Heart right ventricle (tissue), 16 donors: ENCODE measurements at regions of chr1 and their contacts with region 1.

Region 1: GRCh38 chr1:234722904-234723720 is 113.1 kb upstream of the IRF2BP2 start:
- DNase-seq: peak; percentile 59 to 74
- ATAC-seq: peak; percentile 4 to 32 (median 16)
- H3K4me3 ChIP-seq: peak overlapping the region in 5 of 10 donors; percentile 12 to 35 (median 15)
- H3K27ac ChIP-seq: peak overlapping the region; percentile 91 to 100 (median 98)
- H3K4me1 ChIP-seq: peaks cover 57 to 99% (median 93%) of the 10 kb centered on the region in 9 donors
- H3K27me3 ChIP-seq: no peaks in the 10 kb centered on the region
- CTCF ChIP-seq: no peak

Region 2: DNA sequence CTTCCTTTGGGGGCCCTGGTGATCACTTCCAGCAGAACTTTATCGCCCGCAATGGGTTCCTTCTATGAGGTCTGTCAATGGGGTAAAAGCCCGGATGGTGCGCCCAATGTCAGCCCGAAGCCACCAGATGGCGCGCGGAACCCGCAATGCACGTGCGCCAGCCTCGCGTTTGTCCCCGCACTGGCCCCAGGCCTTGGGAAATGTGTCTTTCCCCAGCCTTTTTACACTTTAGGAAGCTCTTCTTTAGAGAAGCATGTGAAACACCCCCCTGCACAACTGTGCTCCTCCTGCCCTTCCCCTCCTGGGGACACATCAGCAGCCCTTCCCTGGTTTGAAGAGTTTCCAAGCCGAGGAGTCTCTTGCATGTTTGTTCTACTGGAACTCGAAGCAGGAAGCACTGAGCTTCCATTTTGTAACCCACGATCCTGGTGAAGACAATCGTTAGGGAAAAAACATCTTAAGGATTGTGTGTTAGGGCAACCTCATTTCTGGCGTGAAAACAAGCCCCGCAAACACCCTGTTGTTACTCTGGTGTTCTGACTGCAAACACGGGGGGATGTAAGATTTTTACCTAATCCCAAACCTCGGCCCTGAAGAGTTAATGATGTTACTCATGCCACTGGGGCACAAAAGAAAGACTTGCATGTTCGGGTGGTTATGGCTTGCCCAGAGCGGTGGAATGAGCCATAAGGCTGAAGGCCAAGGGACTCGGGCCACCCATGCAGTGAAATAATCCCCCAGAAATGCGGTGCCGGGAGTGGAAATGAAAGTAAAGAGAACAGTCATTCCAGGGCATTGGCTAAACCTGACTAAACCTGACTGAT is 223.8 kb before region 1 on chr1:
- intact Hi-C with region 1: loop called in 7 of 10 experiments (anchors 2 to 10 kb)
- DNase-seq: peak; percentile 92 to 93
- ATAC-seq: peak; percentile 95 to 98 (median 97)
- H3K4me3 ChIP-seq: peak overlapping the region in 6 of 10 donors; percentile 3 to 21 (median 12)
- H3K27ac ChIP-seq: peak overlapping the region; percentile 61 to 88 (median 84)
- H3K4me1 ChIP-seq: peaks cover 4 to 48% (median 30%) of the 10 kb centered on the region in 9 donors
- H3K27me3 ChIP-seq: no peaks in the 10 kb centered on the region
- CTCF ChIP-seq: peak; percentile 92 to 99 (median 96)

Region 3: DNA sequence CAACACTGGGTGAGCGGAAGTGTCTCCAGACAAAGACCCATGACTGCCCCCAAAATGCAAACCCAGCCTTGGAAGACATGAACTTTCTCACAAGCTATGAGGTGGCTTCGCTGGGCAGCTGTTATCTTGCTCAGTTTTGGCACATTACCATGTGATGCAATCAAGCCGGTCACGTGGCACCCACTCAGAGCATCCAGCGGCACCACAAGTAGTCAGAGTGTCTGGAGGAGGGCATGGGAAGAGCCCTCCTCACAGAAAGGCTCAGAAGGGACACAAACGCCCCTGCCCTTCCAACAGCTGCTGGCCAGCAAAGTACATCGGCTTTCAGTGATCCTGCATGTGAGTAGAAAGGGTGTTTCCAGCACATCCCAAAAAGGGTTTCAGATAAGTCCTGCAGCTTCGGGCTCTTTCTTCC is 32.3 kb after region 1 on chr1:
- intact Hi-C with region 1: loop called in 1 of 10 experiments (anchors 5 kb)
- DNase-seq: peak; percentile 65 to 67
- ATAC-seq: peak; percentile 50 to 90 (median 80)
- H3K4me3 ChIP-seq: peak overlapping the region in 1 of 10 donors; percentile 6
- H3K27ac ChIP-seq: no peak overlapping the region
- H3K4me1 ChIP-seq: peaks cover 3 to 33% (median 16%) of the 10 kb centered on the region in 9 donors
- H3K27me3 ChIP-seq: no peaks in the 10 kb centered on the region
- CTCF ChIP-seq: no peak

Region 4: DNA sequence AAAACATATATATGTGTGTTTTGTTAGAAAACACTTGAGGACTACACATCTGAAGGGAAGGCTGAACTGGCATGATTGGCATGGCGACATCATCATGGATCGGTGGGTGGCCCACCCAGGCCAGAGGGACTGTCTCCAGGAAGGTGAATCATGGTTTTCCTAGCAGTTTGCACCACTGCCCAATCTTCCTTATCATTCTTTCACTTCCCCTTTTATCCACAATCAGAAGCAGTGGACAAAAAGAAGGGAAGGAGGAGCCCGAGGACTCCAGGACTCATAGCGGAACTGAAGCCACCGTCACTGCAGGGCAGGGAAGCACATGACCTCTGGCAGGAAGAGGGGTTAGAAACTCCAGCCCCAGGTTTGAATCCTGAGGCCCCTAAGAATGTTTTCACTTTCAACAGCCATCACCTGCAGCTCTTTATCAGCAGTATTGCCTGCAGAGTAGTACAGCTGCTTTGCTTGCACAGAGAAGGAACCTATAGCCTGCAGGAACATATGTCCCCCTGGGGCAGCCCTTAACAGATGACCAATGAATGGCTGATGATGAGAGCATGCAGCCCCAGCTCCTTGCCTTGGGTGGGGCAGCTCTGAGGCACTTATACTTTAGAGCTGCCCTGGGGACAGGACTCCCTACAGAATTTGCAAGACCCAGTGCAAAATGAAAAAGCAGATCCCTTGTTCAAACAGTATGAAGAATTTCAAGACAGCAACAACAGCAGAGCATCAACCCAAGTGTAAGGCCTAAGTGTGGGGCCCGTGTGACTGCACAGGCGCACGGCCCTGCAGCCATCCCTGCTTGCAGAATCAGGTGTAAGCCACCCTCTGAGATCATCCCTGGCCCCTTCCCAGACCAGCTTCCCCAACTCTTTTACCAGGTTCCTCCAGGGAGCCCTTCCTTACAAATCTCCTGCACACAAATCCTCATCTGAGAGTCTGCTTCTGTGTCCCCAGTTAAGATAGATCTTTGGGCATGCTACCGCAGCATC is 128.6 kb after region 1 on chr1:
- intact Hi-C with region 1: loop called in 2 of 10 experiments (anchors 5 to 10 kb)
- DNase-seq: no peak
- ATAC-seq: peak in 7 of 8 donors; percentile 34 to 71 (median 47)
- H3K4me3 ChIP-seq: no peak overlapping the region
- H3K27ac ChIP-seq: peak overlapping the region in 1 of 10 donors; percentile 82
- H3K4me1 ChIP-seq: peaks cover 0 to 57% (median 3%) of the 10 kb centered on the region in 9 donors
- H3K27me3 ChIP-seq: no peaks in the 10 kb centered on the region
- CTCF ChIP-seq: no peak

Region 5: DNA sequence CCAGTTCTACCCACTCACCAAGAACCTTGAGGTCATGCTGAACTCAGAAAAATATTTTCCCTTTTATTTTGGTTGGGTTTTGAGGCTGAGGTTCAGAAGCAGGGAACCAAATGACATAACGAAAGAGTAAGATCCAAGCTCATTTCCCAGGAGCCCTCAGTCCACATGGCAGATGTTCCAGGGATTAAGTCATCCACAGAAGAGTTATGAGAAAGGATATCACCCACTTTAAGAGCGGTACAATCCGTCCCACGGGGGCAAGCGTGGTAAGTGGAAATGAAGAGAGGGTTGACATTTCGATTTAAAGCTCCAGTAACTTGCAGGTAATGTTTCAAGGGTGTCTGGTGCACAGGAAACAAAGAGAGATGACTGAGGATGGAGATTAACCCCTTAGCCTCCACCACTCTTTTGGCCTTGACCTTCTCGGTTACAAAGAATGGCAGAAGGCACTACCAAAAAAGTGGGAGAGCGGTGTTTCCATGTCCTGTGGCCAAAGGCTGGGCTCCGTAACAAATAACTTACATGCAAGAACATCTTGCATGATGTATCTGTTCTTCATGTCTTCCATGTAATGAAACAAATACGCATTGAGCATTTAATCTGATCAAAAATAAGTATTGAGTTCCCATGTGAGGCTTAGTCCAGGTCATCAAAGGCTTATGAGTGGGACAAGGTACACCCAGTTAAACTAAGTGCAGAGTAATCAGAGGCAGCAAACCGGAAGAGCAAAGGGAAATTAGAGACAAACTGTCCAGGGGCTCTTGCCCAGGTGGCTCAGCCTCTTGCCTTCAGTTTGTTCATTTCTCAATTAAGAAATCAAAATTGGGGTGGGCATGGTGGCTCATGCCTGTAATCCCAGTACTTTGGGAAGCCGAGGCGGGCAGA is 164.1 kb after region 1 on chr1:
- intact Hi-C with region 1: loop called in 3 of 10 experiments (anchors 1 to 10 kb)
- DNase-seq: peak in 1 of 2 donors; percentile 70
- ATAC-seq: peak; percentile 60 to 86 (median 82)
- H3K4me3 ChIP-seq: peak overlapping the region in 1 of 10 donors; percentile 7
- H3K27ac ChIP-seq: peak overlapping the region; percentile 87 to 99 (median 94)
- H3K4me1 ChIP-seq: peaks cover 7 to 49% (median 33%) of the 10 kb centered on the region in 9 donors
- H3K27me3 ChIP-seq: no peaks in the 10 kb centered on the region
- CTCF ChIP-seq: no peak

Region 6: GRCh38 chr1:234918181-234918841 is 195.2 kb after region 1 on chr1:
- intact Hi-C with region 1: loop called in 4 of 10 experiments (anchors 2 to 10 kb)
- DNase-seq: peak; percentile 54 to 72
- ATAC-seq: peak; percentile 34 to 74 (median 66)
- H3K4me3 ChIP-seq: no peak overlapping the region
- H3K27ac ChIP-seq: peak overlapping the region; percentile 80 to 97 (median 88)
- H3K4me1 ChIP-seq: peaks cover 21 to 86% (median 78%) of the 10 kb centered on the region in 9 donors
- H3K27me3 ChIP-seq: no peaks in the 10 kb centered on the region
- CTCF ChIP-seq: no peak

Region 7: GRCh38 chr1:234928642-234929041 is 205.5 kb after region 1 on chr1:
- intact Hi-C with region 1: no loop called
- DNase-seq: no peak
- ATAC-seq: no peak
- H3K4me3 ChIP-seq: no peak overlapping the region
- H3K27ac ChIP-seq: peak overlapping the region in 1 of 10 donors; percentile 1
- H3K4me1 ChIP-seq: peaks cover 14 to 60% (median 38%) of the 10 kb centered on the region in 9 donors
- H3K27me3 ChIP-seq: no peaks in the 10 kb centered on the region
- CTCF ChIP-seq: no peak

Region 8: GRCh38 chr1:234997201-234997895 is 274.2 kb after region 1 on chr1:
- intact Hi-C with region 1: loop called in 4 of 10 experiments (anchors 2 to 5 kb)
- DNase-seq: peak; percentile 97
- ATAC-seq: peak; percentile 91 to 98 (median 96)
- H3K4me3 ChIP-seq: peak overlapping the region in 5 of 10 donors; percentile 6 to 13 (median 12)
- H3K27ac ChIP-seq: peak overlapping the region; percentile 87 to 95 (median 92)
- H3K4me1 ChIP-seq: peaks cover 21 to 35% (median 30%) of the 10 kb centered on the region in 9 donors
- H3K27me3 ChIP-seq: no peaks in the 10 kb centered on the region
- CTCF ChIP-seq: no peak